HepG2 (cell line): ENCODE measurements at regions of chr4 and their contacts with region 1.

Region 1: DNA sequence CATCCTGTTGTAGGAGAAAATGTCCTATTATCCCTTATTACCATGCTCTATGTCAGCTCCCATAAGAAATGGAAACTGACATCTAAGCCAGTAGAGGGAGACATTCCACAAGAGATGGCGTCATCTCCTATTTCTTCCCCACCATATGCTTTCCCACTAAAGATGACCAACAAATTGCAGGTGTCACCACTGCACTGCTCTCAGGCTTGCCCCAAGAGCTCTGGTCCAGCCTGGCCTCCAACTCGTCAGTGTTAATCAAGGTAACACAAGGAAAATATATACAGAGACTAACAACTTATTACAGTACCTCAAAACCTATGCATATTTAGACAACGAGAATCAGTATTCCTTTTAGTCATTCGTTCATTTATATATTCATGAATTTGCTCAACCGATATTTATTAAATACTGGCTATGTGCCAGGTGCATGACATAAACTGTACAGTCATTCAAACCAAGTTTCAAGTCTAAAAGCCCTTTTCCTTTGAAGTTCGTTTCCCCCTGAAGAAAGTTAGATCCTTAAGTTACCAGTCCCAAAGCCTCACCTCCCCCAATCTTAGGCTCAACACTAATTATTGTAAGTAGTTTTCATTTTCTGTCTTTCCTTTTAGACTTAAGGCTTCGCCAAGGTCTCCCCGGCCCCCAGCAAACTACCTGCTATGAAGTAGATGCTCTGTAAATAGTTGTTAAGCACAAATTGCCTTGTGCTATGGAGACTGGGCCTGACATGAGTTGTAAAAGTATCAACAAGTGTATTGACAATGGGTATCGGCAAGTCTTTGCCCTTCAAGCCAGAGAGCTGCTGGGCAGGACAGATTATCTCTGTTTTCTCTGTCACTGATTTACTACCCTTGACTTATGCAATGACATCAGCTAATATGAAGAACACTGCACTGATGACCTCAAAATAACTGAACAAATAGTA is 3.1 kb upstream of the FGB start:
- DNase-seq: peak; percentile 96
- ATAC-seq: peak; percentile 94
- H3K4me3 ChIP-seq: peak overlapping the region in 2 of 3 experiments; percentile 13 to 32; a peak in 2 of 6 replicates
- H3K27ac ChIP-seq: peak overlapping the region; percentile 71
- H3K4me1 ChIP-seq: peaks cover 46% of the 10 kb centered on the region
- H3K27me3 ChIP-seq: no peaks in the 10 kb centered on the region; a peak in 1 of 5 replicates
- CTCF ChIP-seq: peak; percentile 96
- EP300 ChIP-seq: peak; percentile 47 to 96; a peak in 2 of 4 replicates
- POLR2A ChIP-seq: no peak
- RAD21 ChIP-seq: peak; percentile 96

Region 2: GRCh38 chr4:153294631-153295030 is 1265.1 kb before region 1 on chr4:
- CTCF ChIA-PET with region 1: no interaction called
- POLR2A ChIA-PET with region 1: no interaction called
- in situ Hi-C with region 1: no loop called
- intact Hi-C with region 1: no loop called
- DNase-seq: no peak
- ATAC-seq: no peak
- H3K4me3 ChIP-seq: no peak overlapping the region
- H3K27ac ChIP-seq: no peak overlapping the region
- H3K4me1 ChIP-seq: no peaks in the 10 kb centered on the region
- H3K27me3 ChIP-seq: no peaks in the 10 kb centered on the region
- CTCF ChIP-seq: no peak
- EP300 ChIP-seq: no peak
- POLR2A ChIP-seq: no peak
- RAD21 ChIP-seq: no peak

Region 3: GRCh38 chr4:154584259-154584658 is 24.5 kb after region 1 on chr4:
- CTCF ChIA-PET with region 1: interaction called, 3 read pairs
- POLR2A ChIA-PET with region 1: interaction called, 15 read pairs
- in situ Hi-C with region 1: no loop called
- intact Hi-C with region 1: no loop called
- DNase-seq: no peak
- ATAC-seq: peak; percentile 68
- H3K4me3 ChIP-seq: no peak overlapping the region
- H3K27ac ChIP-seq: peak overlapping the region; percentile 17
- H3K4me1 ChIP-seq: peaks cover 54% of the 10 kb centered on the region
- H3K27me3 ChIP-seq: no peaks in the 10 kb centered on the region
- CTCF ChIP-seq: no peak
- EP300 ChIP-seq: no peak
- POLR2A ChIP-seq: peak; percentile 37 to 72; a peak in 2 of 4 replicates
- RAD21 ChIP-seq: no peak

Region 4: GRCh38 chr4:154595807-154596206 is 36.1 kb after region 1 on chr4:
- CTCF ChIA-PET with region 1: interaction called, 3 read pairs
- POLR2A ChIA-PET with region 1: interaction called, 34 read pairs
- in situ Hi-C with region 1: no loop called
- intact Hi-C with region 1: loop called (anchors 1 kb)
- DNase-seq: peak; percentile 73
- ATAC-seq: no peak
- H3K4me3 ChIP-seq: no peak overlapping the region
- H3K27ac ChIP-seq: peak overlapping the region; percentile 45
- H3K4me1 ChIP-seq: peaks cover 98% of the 10 kb centered on the region
- H3K27me3 ChIP-seq: no peaks in the 10 kb centered on the region
- CTCF ChIP-seq: no peak
- EP300 ChIP-seq: peak in 1 of 2 experiments; percentile 98; a peak in 2 of 4 replicates
- POLR2A ChIP-seq: no peak
- RAD21 ChIP-seq: no peak

Region 5: GRCh38 chr4:154612472-154613414 is 53.0 kb after region 1 on chr4 and contains the start of gene FGG:
- CTCF ChIA-PET with region 1: interaction called, 233 read pairs
- POLR2A ChIA-PET with region 1: interaction called, 127 read pairs
- in situ Hi-C with region 1: loop called (anchors 5 kb)
- intact Hi-C with region 1: no loop called
- DNase-seq: peak; percentile 91
- ATAC-seq: peak; percentile 98
- H3K4me3 ChIP-seq: peak within 1 kb of the TSS; percentile 67 to 74 (median 67)
- H3K27ac ChIP-seq: peak within 1 kb of the TSS; percentile 78
- H3K4me1 ChIP-seq: peaks cover 70% of the 10 kb centered on the region
- H3K27me3 ChIP-seq: no peaks in the 10 kb centered on the region
- CTCF ChIP-seq: no peak
- EP300 ChIP-seq: peak in 1 of 2 experiments; percentile 80; a peak in 2 of 4 replicates
- POLR2A ChIP-seq: peak; percentile 96 to 99
- RAD21 ChIP-seq: no peak
- total RNA-seq, gene FGG: 1,495 and 2,423 TPM in 2 replicates

Region 6: GRCh38 chr4:154738426-154738825 is 178.7 kb after region 1 on chr4:
- CTCF ChIA-PET with region 1: no interaction called
- POLR2A ChIA-PET with region 1: no interaction called
- in situ Hi-C with region 1: no loop called
- intact Hi-C with region 1: no loop called
- DNase-seq: no peak
- ATAC-seq: no peak
- H3K4me3 ChIP-seq: no peak overlapping the region
- H3K27ac ChIP-seq: no peak overlapping the region
- H3K4me1 ChIP-seq: no peaks in the 10 kb centered on the region
- H3K27me3 ChIP-seq: peaks cover 3 to 9% of the 10 kb centered on the region in 2 experiments; a peak in 3 of 5 replicates
- CTCF ChIP-seq: no peak
- EP300 ChIP-seq: no peak
- POLR2A ChIP-seq: no peak
- RAD21 ChIP-seq: no peak

Region 7: DNA sequence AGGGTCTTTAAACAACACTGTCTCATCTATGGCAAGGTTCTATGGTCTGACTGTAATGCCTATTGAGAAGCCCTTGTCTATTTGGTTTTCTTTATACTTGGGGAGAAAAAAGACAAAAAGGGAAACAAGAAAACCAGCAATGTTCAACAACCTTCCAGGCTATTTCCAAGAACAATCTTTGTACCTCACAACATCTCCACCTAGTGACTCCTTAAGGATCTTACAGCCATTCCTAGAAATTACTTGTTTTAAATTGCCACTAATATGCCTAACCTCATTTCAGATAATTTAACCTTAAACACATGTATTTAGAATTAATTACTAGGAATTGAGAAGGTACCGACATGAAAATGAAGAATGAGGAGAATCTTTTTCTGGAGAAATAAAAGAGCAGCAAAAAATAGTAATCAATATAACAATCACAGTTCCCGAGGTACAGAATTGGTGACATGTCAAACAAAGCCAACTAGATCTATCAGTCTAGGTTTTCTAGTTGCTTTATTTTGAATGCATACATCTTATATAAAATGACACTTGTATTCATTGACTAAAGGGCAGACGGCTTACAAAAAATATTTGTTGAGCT is 219.7 kb after region 1 on chr4:
- CTCF ChIA-PET with region 1: no interaction called
- POLR2A ChIA-PET with region 1: no interaction called
- in situ Hi-C with region 1: loop called (anchors 5 kb)
- intact Hi-C with region 1: loop called (anchors 2 kb)
- DNase-seq: peak; percentile 23
- ATAC-seq: no peak
- H3K4me3 ChIP-seq: no peak overlapping the region
- H3K27ac ChIP-seq: no peak overlapping the region
- H3K4me1 ChIP-seq: no peaks in the 10 kb centered on the region
- H3K27me3 ChIP-seq: no peaks in the 10 kb centered on the region
- CTCF ChIP-seq: peak; percentile 57
- EP300 ChIP-seq: no peak
- POLR2A ChIP-seq: no peak
- RAD21 ChIP-seq: 0 out of 2 replicates have a peak, but pooled peaks have one; percentile 23